ENCODE measurements at regions of chr14 and their contacts with region 1.

Region 1: DNA sequence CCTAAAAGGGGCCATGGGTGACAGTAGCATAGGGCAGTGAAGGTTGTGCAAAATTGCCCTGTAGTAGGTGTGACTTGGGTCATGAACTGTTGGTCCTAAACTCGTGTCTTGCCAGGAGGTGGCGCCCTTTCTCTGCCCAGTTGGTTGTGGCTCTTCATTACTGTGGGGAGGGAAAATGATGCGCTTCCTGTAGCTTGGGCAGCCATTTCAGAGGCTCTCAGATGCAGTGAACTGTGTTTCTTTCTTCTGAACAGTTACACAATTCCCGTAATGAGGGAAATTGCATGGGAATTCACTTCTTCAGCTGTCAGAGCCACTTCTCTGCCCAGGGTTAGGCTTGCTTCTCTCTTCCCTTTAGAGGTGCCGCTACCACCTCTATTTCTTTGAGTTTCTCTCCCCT is 148.1 kb upstream of the NRXN3 start:
- DNase-seq: peak; percentile 46
- H3K4me3 ChIP-seq: no peak overlapping the region
- H3K27ac ChIP-seq: no peak overlapping the region
- H3K4me1 ChIP-seq: no peaks in the 10 kb centered on the region
- H3K27me3 ChIP-seq: no peaks in the 10 kb centered on the region
- CTCF ChIP-seq: peak; percentile 65 to 68

Region 2: GRCh38 chr14:77862154-77862786 is 159.8 kb before region 1 on chr14:
- CTCF ChIA-PET with region 1: no interaction called
- dilution Hi-C with region 1: no loop called
- in situ Hi-C with region 1: no loop called
- intact Hi-C with region 1: loop called (anchors 10 kb)
- DNase-seq: peak; percentile 21
- H3K4me3 ChIP-seq: no peak overlapping the region
- H3K27ac ChIP-seq: no peak overlapping the region
- H3K4me1 ChIP-seq: no peaks in the 10 kb centered on the region
- H3K27me3 ChIP-seq: no peaks in the 10 kb centered on the region
- CTCF ChIP-seq: peak; percentile 92 to 99

Region 3: GRCh38 chr14:77980475-77981321 is 41.4 kb before region 1 on chr14:
- CTCF ChIA-PET with region 1: no interaction called
- dilution Hi-C with region 1: no loop called
- in situ Hi-C with region 1: no loop called
- intact Hi-C with region 1: no loop called
- DNase-seq: peak; percentile 35
- H3K4me3 ChIP-seq: peak overlapping the region; percentile 43 to 50 (median 48)
- H3K27ac ChIP-seq: no peak overlapping the region
- H3K4me1 ChIP-seq: no peaks in the 10 kb centered on the region
- H3K27me3 ChIP-seq: no peaks in the 10 kb centered on the region
- CTCF ChIP-seq: no peak

Region 4: DNA sequence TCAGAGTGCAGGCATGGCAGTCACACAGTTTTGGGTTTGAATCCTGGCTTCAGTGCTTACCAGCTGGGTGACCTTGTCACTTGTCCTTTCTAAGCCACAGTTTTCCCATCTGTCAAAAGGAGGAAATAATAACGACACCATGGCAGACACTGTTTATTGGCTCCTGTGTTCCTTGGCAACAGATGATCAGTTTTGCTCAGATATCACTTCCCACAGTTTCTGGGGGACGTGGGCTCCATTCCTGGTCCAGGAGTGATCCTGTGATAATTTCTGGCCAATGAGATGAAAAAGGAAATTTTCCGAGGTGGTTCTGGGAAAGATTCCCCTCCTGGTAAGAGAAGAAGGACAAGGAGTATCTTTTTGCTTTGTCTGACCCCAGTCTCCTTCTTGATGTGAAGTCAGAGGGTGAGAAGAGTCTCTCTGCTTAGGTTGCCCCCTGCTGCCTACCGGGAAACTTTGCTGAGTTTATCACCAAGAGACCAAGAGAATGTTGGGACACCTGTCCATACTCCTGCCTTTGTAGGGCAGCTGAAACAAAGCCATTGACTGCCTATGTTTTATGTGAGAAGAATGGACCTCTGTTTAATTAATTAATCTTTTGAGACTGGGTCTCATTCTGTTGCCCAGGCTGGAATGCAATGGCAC is 30.8 kb before region 1 on chr14:
- CTCF ChIA-PET with region 1: no interaction called
- dilution Hi-C with region 1: no loop called
- in situ Hi-C with region 1: no loop called
- intact Hi-C with region 1: no loop called
- DNase-seq: no peak
- H3K4me3 ChIP-seq: no peak overlapping the region
- H3K27ac ChIP-seq: no peak overlapping the region
- H3K4me1 ChIP-seq: no peaks in the 10 kb centered on the region
- H3K27me3 ChIP-seq: no peaks in the 10 kb centered on the region
- CTCF ChIP-seq: peak in 1 of 2 donors; percentile 6

Region 5: DNA sequence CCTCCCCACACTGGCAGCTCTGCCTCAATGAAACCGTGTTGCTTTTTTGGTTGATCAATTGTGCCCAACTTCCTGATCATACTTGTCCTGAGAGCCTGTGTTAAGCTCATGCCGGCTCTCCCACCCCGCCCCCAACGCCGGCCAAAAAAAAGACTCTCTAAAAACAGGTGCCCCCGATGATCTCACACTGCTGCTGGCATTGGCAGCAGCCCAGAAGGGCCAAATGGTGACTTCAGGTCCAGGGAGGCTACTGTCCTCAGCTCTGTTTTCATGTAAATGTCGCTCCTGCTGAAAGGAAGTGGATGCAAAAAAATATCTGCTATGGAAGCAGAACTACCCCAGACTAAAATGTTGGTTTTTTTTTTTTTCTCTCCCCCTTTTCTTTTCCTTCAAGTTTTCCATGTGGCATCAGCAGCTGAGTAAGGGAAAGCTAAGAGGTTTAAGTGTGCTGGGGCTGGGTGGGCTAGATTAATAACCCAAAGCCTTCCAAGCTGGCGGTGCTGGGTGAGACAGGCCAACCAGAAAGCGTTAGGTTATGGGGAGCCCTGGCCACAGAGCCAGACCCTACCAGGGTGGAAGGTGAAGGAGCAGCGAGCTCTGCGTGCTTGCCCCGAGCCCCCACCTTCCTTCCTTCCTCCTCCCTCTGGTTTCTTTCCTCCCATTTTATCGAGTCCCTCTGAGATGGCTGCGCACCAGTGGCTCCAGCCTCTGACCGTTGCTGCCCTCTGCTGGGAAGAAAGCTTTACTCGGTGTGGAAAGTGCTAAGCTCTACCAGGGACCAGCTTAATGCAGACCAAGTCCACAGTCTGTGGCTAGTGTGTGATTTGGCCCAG is 544.2 kb after region 1 on chr14:
- CTCF ChIA-PET with region 1: interaction called, 9 read pairs
- dilution Hi-C with region 1: no loop called
- in situ Hi-C with region 1: no loop called
- intact Hi-C with region 1: loop called (anchors 1 kb)
- DNase-seq: peak; percentile 49
- H3K4me3 ChIP-seq: no peak overlapping the region
- H3K27ac ChIP-seq: no peak overlapping the region
- H3K4me1 ChIP-seq: no peaks in the 10 kb centered on the region
- H3K27me3 ChIP-seq: no peaks in the 10 kb centered on the region
- CTCF ChIP-seq: peak; percentile 43 to 75

Region 6: DNA sequence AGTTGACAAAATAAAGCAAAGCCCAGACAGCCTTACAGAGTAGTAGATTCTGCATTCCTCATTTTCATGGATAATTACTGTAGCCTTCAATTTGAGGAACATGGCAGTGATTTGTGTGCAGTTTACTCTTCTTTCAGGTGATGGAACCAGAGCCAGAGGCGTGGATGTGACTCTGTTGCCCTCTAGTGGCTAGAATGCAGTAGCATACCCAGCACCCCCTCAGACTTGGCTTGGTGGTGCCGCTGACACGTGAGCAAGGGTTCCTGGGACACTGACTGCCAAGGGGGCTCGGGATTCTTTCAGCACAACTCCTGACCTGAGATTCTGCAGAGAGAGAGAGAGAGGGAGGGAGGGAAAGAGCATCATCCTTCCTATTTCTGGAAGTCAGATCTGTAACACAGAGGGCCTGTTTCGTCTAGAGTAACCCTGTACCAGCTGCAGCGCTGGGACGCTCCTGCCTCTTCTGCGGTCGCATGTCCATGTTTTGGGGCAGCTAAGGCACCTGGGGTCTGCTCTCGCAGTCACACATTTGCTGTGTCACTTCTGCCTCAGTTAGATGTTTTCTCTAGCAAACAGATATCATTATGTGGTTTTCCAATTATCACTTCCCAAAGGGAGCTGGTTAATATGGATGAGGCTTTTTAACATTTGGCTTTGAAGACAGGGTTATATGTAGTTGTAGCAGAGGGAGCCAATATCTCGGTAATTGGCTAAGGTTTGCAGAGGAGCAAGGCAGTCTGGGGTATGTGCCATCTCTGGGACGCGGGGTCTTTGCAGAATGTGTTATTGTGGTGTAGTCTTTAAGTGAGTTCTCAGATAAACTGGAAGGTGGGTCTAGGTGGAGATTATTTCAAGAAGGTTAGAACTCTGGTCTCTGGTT is 576.2 kb after region 1 on chr14:
- CTCF ChIA-PET with region 1: no interaction called
- dilution Hi-C with region 1: no loop called
- in situ Hi-C with region 1: no loop called
- intact Hi-C with region 1: loop called (anchors 10 kb)
- DNase-seq: peak; percentile 16
- H3K4me3 ChIP-seq: no peak overlapping the region
- H3K27ac ChIP-seq: no peak overlapping the region
- H3K4me1 ChIP-seq: no peaks in the 10 kb centered on the region
- H3K27me3 ChIP-seq: no peaks in the 10 kb centered on the region
- CTCF ChIP-seq: peak; percentile 91 to 96

Measured in mammary epithelial cell (primary cell).